ENCODE measurements at regions of chr1 and their contacts with region 1.

Region 1: DNA sequence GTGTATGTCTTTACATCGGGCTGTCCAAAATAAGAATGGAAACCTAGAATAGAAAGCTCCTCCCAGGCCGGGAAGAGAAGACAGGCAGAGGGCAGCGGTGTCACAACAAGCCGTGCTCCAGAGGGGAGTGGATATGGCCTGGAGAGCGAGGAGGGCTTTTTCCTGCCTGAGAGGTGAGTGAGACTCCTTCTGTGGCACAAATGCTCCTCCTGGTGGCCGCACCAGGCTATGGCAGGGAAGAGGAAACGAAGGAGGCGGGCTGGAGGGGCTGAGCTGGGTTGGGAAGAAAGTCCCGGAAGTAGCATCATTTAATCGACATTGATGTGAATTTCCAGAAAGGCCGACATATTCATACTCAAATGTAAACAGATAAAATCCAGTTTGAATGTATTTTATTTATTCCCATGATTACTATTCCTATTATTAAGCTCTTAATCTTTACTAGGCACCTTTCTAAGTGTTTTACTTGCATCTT is 54.7 kb downstream of the MEF2D start:
- DNase-seq: peak; percentile 81
- ATAC-seq: peak; percentile 97
- H3K4me3 ChIP-seq: no peak overlapping the region
- H3K27ac ChIP-seq: peak overlapping the region; percentile 15; the same call in 1 of the 2 replicates
- H3K4me1 ChIP-seq: peaks cover 5 to 18% of the 10 kb centered on the region in 2 experiments; a peak in 3 of 4 replicates
- H3K27me3 ChIP-seq: no peaks in the 10 kb centered on the region
- CTCF ChIP-seq: peak; percentile 91 to 97 (median 97)
- POLR2A ChIP-seq: peak; percentile 32
- RAD21 ChIP-seq: peak; percentile 99

Region 2: DNA sequence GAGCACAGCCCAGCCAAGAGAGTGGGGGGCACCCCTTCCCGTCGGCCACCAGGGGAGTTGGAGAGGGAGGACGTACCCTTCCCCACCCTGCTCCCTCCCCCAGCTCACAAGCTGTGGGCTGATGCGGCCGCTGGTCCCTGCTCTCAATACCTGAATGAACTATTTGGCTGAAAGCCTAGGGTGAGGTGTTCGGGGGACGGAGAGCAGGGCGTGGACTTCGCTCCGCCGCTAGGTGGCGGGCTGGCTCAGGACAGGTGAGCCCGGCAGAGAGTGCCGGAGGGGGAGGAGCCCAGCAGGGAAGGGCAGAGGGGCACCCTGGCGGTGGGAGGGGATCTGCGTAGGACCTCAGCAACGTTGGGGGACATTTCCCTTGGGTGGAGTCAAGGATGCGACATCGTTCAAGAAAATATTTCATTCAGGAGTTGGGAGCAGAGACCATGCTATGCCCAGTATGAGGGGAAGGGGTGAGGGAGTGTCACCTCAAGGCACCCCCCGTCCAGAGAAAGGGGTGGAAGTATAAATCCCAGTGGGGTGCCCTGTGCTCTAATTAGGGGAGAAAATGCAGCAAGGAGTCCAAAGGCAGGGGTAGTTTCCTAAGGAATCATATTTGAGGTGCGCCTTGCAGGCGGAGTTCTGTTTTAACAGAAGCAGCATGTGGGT is 88.8 kb before region 1 on chr1:
- CTCF ChIA-PET with region 1: interaction called, 7 read pairs
- POLR2A ChIA-PET with region 1: interaction called, 4 read pairs
- RAD21 ChIA-PET with region 1: no interaction called
- intact Hi-C with region 1: loop called (anchors 1 kb)
- DNase-seq: peak; percentile 69
- ATAC-seq: peak; percentile 96
- H3K4me3 ChIP-seq: peak overlapping the region; percentile 30 to 43
- H3K27ac ChIP-seq: no peak overlapping the region
- H3K4me1 ChIP-seq: peaks cover 13 to 17% of the 10 kb centered on the region in 2 experiments; a peak in 3 of 4 replicates
- H3K27me3 ChIP-seq: no peaks in the 10 kb centered on the region
- CTCF ChIP-seq: peak; percentile 88 to 97 (median 95)
- POLR2A ChIP-seq: no peak
- RAD21 ChIP-seq: peak; percentile 73

Region 3: GRCh38 chr1:156388174-156389137 is 57.4 kb before region 1 on chr1:
- CTCF ChIA-PET with region 1: interaction called, 322 read pairs
- POLR2A ChIA-PET with region 1: interaction called, 25 read pairs
- RAD21 ChIA-PET with region 1: interaction called, 33 to 51 read pairs
- intact Hi-C with region 1: loop called (anchors 1 kb)
- DNase-seq: no peak
- ATAC-seq: no peak
- H3K4me3 ChIP-seq: no peak overlapping the region
- H3K27ac ChIP-seq: no peak overlapping the region
- H3K4me1 ChIP-seq: no peaks in the 10 kb centered on the region; a peak in 1 of 4 replicates
- H3K27me3 ChIP-seq: no peaks in the 10 kb centered on the region
- CTCF ChIP-seq: no peak
- POLR2A ChIP-seq: no peak
- RAD21 ChIP-seq: no peak

Region 4: DNA sequence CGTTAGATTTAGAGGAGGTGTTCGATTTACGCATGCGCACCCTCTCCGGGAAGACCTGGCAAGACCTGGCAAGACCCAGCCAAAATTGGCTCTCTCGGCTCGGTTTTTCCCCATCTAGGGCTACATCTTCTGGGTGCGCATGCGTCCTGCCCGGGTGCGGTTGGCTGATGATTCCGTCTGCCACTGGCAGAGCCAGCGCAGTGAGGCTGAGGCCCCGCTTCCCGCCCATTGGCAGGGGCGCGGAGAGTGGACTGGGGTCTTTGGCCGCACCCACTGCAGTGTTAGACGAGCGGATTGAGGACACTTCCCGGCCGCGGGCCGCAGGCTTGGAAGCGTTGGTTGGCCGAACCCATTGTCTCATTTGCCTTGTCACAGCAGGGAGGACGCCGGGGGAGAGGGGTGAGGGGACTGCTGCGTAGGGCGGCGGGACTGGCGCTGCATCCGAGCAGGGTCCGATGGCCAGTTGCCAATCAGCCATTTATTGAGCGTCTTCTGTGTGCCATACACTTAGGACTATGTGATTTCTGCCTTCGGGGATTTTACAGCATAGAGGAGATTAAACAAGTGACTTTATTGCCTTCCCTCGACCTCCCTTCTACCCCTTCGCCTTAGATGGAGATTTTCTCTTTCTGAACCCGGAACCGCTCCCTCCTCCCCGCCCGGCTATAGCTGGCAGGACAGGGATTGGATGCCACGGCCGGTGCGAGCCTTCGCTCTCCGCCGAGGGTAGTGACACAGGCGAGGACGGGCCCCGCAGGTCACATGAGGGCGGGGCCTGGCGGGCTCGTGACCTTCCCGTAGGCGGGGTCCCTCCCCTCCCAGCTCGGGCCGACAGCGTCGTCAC is 11.0 kb after region 1 on chr1:
- CTCF ChIA-PET with region 1: interaction called, 23 read pairs
- POLR2A ChIA-PET with region 1: interaction called, 4 read pairs
- RAD21 ChIA-PET with region 1: interaction called, 3 to 4 read pairs
- intact Hi-C with region 1: no loop called
- DNase-seq: peak; percentile 97
- ATAC-seq: peak; percentile 87
- H3K4me3 ChIP-seq: peak overlapping the region; percentile 61 to 65
- H3K27ac ChIP-seq: peak overlapping the region; percentile 98
- H3K4me1 ChIP-seq: peaks cover 13 to 28% of the 10 kb centered on the region in 2 experiments; a peak in 3 of 4 replicates
- H3K27me3 ChIP-seq: no peaks in the 10 kb centered on the region
- CTCF ChIP-seq: no peak
- POLR2A ChIP-seq: peak; percentile 54
- RAD21 ChIP-seq: no peak

Region 5: DNA sequence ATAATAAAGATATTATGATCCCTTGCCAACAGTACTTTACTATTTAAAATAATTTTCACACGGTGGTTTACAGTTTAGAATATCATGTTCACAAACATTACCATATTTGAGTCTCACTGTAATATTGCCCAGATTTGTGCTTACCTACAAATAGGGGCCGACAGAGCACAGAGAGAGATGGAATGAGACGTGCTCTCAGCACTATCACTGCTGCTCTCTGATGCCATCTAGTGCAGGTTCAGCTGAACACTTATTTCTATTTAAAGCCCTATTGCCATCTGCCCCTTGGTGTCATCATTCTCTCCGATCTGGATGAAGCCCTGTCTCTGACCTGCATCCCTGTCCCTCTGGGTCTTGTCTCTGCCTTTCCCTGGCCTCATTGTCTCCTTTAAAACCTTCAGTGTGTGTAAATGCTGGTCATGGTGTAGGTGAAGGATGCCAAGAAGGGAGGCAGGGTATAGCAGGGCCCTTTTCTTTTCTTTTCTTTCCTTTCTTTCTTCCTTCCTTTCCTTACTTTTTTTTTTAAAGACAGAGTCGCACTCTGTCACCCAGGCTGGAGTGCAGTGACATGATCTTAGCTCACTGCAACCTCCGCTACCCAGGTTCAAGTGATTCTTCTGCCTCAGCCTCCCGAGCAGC is 162.3 kb after region 1 on chr1:
- CTCF ChIA-PET with region 1: interaction called, 5 read pairs
- POLR2A ChIA-PET with region 1: no interaction called
- RAD21 ChIA-PET with region 1: no interaction called
- intact Hi-C with region 1: loop called (anchors 1 kb)
- DNase-seq: peak; percentile 66
- ATAC-seq: peak; percentile 95
- H3K4me3 ChIP-seq: no peak overlapping the region
- H3K27ac ChIP-seq: no peak overlapping the region
- H3K4me1 ChIP-seq: peaks cover under 1 to 17% of the 10 kb centered on the region in 2 experiments; a peak in 3 of 4 replicates
- H3K27me3 ChIP-seq: no peaks in the 10 kb centered on the region
- CTCF ChIP-seq: peak; percentile 79 to 95 (median 80)
- POLR2A ChIP-seq: no peak
- RAD21 ChIP-seq: peak; percentile 88